ENCODE measurements at regions of chr14 and their contacts with region 1.

Region 1: DNA sequence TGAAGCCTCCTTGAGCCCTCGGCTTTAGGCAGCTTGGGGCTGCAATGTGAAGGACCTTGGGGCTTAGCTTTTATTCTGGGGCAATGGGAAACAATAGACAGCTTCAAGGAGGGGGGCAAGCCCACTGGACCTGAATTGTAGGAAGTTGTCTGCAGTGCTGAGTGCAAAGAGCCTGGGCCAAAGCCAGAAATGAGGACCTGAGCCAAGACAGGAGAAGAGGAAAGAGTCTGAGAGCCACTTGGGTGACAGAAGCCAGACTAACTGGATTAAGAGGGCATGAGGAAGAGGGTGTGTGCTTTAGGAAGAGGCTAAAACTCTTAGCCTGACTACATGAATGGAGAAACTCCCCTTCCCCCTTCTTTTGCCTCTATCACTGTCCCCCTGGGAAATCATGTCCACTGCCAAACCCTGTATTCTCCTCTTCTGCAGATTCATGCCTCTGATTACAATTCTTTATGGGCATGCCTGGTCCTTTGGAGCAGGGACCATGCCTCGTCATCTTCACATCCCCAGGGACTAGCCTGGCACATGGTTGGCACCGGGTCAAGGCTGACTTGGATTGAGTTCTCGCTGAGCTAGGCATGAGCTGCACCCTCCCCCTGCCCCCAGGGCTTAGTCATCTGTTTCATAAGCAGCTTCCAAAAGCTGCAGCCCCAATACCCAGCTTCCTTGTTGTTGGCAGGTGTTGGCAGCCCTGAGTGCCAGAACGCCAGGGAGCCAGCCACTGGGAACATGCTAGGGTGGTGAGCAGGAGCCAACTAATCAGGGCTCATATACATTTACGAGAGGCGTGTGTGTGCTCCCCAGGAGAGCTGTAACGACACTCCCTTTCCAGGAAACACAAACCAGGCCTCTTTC is 27.8 kb upstream of the JDP2 start:
- DNase-seq: peak; percentile 86
- H3K4me3 ChIP-seq: no peak overlapping the region
- H3K27ac ChIP-seq: no peak overlapping the region
- H3K4me1 ChIP-seq: peaks cover 6% of the 10 kb centered on the region
- H3K27me3 ChIP-seq: no peaks in the 10 kb centered on the region
- CTCF ChIP-seq: no peak

Region 2: GRCh38 chr14:75011356-75011994 is 388.6 kb before region 1 on chr14:
- CTCF ChIA-PET with region 1: no interaction called
- dilution Hi-C with region 1: no loop called
- in situ Hi-C with region 1: no loop called
- intact Hi-C with region 1: no loop called
- DNase-seq: peak; percentile 21
- H3K4me3 ChIP-seq: no peak overlapping the region
- H3K27ac ChIP-seq: no peak overlapping the region
- H3K4me1 ChIP-seq: peaks cover 9% of the 10 kb centered on the region
- H3K27me3 ChIP-seq: no peaks in the 10 kb centered on the region
- CTCF ChIP-seq: no peak

Region 3: DNA sequence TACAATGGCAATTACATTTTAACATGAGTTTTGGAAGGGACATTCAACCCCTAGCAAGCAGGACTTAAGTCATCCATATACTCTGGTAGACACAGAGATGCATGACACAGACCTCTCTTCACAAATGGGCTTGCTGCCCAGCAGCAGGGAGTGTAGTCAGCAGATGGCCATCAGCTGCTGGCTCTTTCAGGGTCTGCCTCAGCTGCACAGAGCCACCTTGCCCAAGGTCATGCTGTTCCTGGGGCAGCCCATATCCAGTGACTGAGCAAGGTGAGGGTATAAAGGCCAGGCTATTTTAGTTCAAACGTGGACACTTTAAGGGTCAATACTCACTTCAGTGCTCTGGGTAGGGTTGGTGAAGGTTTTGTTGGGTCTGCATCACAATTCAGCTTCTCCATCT is 30.5 kb before region 1 on chr14:
- CTCF ChIA-PET with region 1: no interaction called
- dilution Hi-C with region 1: loop called (anchors 5 kb)
- in situ Hi-C with region 1: no loop called
- intact Hi-C with region 1: no loop called
- DNase-seq: no peak
- H3K4me3 ChIP-seq: no peak overlapping the region
- H3K27ac ChIP-seq: no peak overlapping the region
- H3K4me1 ChIP-seq: no peaks in the 10 kb centered on the region
- H3K27me3 ChIP-seq: peaks cover 5% of the 10 kb centered on the region
- CTCF ChIP-seq: no peak

Measured in mammary epithelial cell (primary cell).